ENCODE measurements at regions of chr7 and their contacts with region 1.

Region 1: DNA sequence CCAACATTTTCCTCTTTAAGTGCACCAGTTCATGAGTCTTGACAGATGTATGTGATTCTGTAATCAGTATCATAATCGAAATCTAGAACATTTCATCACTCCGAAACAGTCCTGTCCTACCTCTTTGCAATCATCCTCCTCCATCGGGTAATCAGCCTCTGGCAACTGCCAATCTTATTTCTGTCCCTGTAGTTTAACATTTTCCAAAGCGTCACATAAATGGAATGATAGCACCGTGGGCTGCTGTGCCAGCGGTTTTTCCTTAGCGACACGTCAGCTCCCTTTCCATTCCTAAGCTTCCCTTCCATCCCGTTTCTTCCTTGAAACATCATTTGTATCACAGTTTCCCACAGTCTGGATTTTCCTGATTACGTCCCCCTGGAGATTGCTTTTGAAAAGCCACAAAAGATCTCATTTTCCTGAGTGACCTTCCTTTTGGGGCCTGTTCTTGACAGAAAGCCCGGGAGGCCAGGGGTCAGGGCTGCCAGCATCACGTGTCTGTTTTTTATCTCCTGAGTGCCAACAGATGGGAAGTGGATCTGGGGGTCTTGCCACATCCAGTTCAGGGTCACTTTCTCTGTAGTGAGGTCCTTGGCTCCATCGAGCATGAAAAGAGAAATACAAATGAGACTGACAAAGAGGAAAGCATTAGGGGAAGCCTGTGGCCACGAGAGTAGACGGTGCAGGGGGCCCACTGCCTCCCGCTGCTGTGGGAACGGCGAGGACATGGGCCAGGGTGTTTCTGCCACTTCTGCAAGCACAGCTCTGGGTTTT is 31.6 kb downstream of the TMEM120A start:
- DNase-seq: peak; percentile 79
- ATAC-seq: peak; percentile 64
- H3K4me3 ChIP-seq: no peak overlapping the region
- H3K27ac ChIP-seq: peak overlapping the region; percentile 71
- H3K4me1 ChIP-seq: peaks cover 58% of the 10 kb centered on the region
- H3K27me3 ChIP-seq: no peaks in the 10 kb centered on the region
- CTCF ChIP-seq: no peak
- EP300 ChIP-seq: peak in 1 of 2 experiments; percentile 87; a peak in 2 of 4 replicates
- POLR2A ChIP-seq: no peak
- RAD21 ChIP-seq: no peak

Region 2: GRCh38 chr7:75878769-75879611 is 83.8 kb before region 1 on chr7 and contains the start of gene RHBDD2:
- CTCF ChIA-PET with region 1: no interaction called
- POLR2A ChIA-PET with region 1: no interaction called
- in situ Hi-C with region 1: loop called (anchors 5 kb)
- intact Hi-C with region 1: no loop called
- DNase-seq: peak; percentile 84
- ATAC-seq: peak; percentile 96
- H3K4me3 ChIP-seq: peak within 1 kb of the TSS; percentile 80 to 96 (median 92)
- H3K27ac ChIP-seq: peak within 1 kb of the TSS; percentile 70
- H3K4me1 ChIP-seq: peaks cover 38% of the 10 kb centered on the region
- H3K27me3 ChIP-seq: no peaks in the 10 kb centered on the region; a peak in 1 of 5 replicates
- CTCF ChIP-seq: peak; percentile 52
- EP300 ChIP-seq: no peak; a peak in 1 of 4 replicates
- POLR2A ChIP-seq: peak; percentile 81 to 96
- RAD21 ChIP-seq: peak; percentile 67; the same call in 1 of the 2 replicates
- total RNA-seq, gene RHBDD2: 14.9 and 23.1 TPM in 2 replicates